Naive thymus-derived CD4-positive, alpha-beta T cell (primary cell): ENCODE measurements at regions of chr6 and their contacts with region 1.

Region 1: DNA sequence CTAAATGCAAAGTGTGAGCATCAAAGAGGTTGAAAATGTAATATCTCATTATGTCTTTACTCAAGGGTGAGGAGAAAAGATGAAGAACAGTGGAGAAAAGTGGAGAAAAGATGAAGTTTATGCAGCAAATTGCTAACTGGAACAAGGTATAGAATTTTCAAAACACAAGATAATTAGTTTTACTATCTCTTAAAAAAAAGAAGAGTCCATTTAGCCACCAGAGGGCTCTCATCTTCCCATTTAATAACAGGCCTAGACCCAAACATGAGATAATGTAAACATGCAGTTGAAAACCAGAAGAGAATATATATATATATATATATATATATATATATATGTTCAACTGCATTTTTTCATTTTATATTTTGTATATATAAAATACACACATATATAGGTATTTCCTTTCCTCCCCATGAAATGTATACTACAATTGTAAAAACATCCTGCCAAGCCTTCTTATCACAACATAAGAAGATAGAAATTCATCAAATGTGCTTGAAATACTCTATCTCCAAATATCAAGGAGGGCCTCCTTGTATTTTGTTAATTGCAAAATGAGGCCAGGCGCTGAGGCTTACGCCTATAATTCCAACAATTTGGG is 78.4 kb downstream of the ADTRP start:
- DNase-seq: peak in 7 of 9 donors; percentile 22 to 63 (median 51)
- ATAC-seq: peak; percentile 60
- H3K4me3 ChIP-seq: no peak overlapping the region
- H3K4me3 Mint-ChIP-seq: no peak overlapping the region
- H3K27ac ChIP-seq: no peak overlapping the region
- H3K27ac Mint-ChIP-seq: peak overlapping the region in 3 of 9 donors; percentile 21 to 66 (median 41)
- H3K4me1 ChIP-seq: peaks cover 0 to 9% of the 10 kb centered on the region in 2 donors
- H3K4me1 Mint-ChIP-seq: peaks cover 10 to 42% (median 35%) of the 10 kb centered on the region in 7 donors
- H3K27me3 ChIP-seq: no peaks in the 10 kb centered on the region
- H3K27me3 Mint-ChIP-seq: no peaks in the 10 kb centered on the region

Region 2: DNA sequence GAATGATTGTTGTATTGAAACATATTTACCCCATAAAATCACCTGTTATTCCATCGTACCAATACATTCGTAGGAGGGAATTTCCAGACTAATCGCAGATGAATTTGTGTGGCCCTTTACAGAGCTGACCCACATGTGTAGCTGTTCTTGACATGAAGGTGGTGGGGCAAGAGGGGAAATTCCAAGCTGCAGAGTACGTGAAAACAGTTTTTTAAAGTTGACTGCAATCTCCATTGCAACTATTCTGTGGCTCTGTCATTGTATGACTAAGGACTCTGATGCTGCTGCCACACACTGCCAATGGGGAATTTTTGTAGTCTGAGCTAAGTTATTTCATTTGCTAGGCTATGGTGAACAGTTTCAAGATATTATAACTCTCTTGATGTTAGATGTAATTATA is 124.8 kb after region 1 on chr6:
- CTCF ChIA-PET with region 1: no interaction called
- POLR2A ChIA-PET with region 1: no interaction called
- intact Hi-C with region 1: loop called in 1 of 2 experiments (anchors 1 kb)
- DNase-seq: peak in 1 of 9 donors; percentile 29
- ATAC-seq: peak; percentile 47
- H3K4me3 ChIP-seq: no peak overlapping the region
- H3K4me3 Mint-ChIP-seq: no peak overlapping the region
- H3K27ac ChIP-seq: no peak overlapping the region
- H3K27ac Mint-ChIP-seq: peak overlapping the region in 1 of 9 donors; percentile 65
- H3K4me1 ChIP-seq: no peaks in the 10 kb centered on the region
- H3K4me1 Mint-ChIP-seq: peaks cover 2 to 10% (median 7%) of the 10 kb centered on the region in 7 donors
- H3K27me3 ChIP-seq: no peaks in the 10 kb centered on the region
- H3K27me3 Mint-ChIP-seq: no peaks in the 10 kb centered on the region

Region 3: DNA sequence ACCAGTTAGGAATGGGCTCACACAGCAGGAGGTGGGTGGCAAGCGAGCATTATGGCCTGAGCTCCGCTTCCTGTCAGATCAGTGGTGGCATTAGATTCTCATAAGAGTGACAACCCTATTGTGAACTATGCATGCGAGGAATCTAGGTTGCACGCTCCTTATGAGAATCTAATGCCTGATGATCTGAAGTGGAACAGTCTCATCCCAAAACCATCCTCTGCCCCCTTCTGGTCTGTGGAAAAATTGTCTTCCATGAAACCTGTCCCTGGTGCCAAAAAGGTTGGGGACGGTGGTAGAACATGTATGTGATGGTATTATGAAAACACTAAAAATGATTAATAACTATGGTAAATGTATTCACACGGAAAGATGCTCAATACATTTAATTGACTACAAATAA is 212.2 kb after region 1 on chr6:
- CTCF ChIA-PET with region 1: no interaction called
- POLR2A ChIA-PET with region 1: no interaction called
- intact Hi-C with region 1: loop called in 1 of 2 experiments (anchors 5 kb)
- DNase-seq: no peak
- ATAC-seq: no peak
- H3K4me3 ChIP-seq: no peak overlapping the region
- H3K4me3 Mint-ChIP-seq: no peak overlapping the region
- H3K27ac ChIP-seq: no peak overlapping the region
- H3K27ac Mint-ChIP-seq: no peak overlapping the region
- H3K4me1 ChIP-seq: no peaks in the 10 kb centered on the region
- H3K4me1 Mint-ChIP-seq: peaks cover 0 to 3% (median 0%) of the 10 kb centered on the region in 7 donors
- H3K27me3 ChIP-seq: no peaks in the 10 kb centered on the region
- H3K27me3 Mint-ChIP-seq: no peaks in the 10 kb centered on the region

Region 4: DNA sequence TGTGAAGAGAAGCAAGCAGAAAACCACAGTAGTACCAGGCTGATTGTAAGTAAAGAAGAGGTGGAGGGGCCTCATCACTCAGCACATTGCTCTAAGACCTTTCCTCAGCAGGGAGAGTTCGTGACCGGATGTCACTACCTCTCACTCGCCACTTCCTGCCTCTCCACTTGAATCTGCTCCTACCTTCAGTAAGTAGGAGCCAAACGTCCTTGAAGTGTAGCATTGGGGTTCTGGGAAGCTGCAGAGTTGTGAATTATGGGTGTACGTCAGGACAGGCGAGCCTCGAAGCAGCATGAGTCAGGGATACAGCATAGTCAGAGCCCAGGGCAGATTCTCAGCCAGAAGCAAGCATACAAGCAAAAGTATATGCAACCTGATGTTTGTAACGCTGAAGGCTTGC is 1241.2 kb after region 1 on chr6:
- CTCF ChIA-PET with region 1: no interaction called
- POLR2A ChIA-PET with region 1: no interaction called
- intact Hi-C with region 1: no loop called
- DNase-seq: no peak
- ATAC-seq: no peak
- H3K4me3 ChIP-seq: no peak overlapping the region
- H3K4me3 Mint-ChIP-seq: peak overlapping the region in 1 of 10 donors; percentile 61
- H3K27ac ChIP-seq: no peak overlapping the region
- H3K27ac Mint-ChIP-seq: peak overlapping the region in 1 of 9 donors; percentile 62
- H3K4me1 ChIP-seq: no peaks in the 10 kb centered on the region
- H3K4me1 Mint-ChIP-seq: peaks cover 4 to 19% (median 6%) of the 10 kb centered on the region in 7 donors
- H3K27me3 ChIP-seq: peaks cover 0 to 2% of the 10 kb centered on the region in 2 donors
- H3K27me3 Mint-ChIP-seq: peaks cover 0 to 12% (median 7%) of the 10 kb centered on the region in 5 donors